H1 (cell line): ENCODE measurements at regions of chr7 and their contacts with region 1.

Region 1: GRCh38 chr7:138459413-138460175 is 465 bp upstream of the TRIM24 start:
- DNase-seq: peak; percentile 96 to 99
- H3K4me3 ChIP-seq: peak overlapping the region; percentile 44 to 80 (median 70)
- H3K27ac ChIP-seq: peak overlapping the region; percentile 59
- H3K4me1 ChIP-seq: peaks cover 0 to 10% (median 6%) of the 10 kb centered on the region in 4 experiments; a peak in 5 of 7 replicates
- H3K27me3 ChIP-seq: no peaks in the 10 kb centered on the region
- CTCF ChIP-seq: no peak
- EP300 ChIP-seq: no peak
- POLR2A ChIP-seq: peak; percentile 71 to 96
- RAD21 ChIP-seq: peak in 1 of 2 experiments; percentile 15; a peak in 1 of 4 replicates

Region 2: GRCh38 chr7:138170959-138171703 is 288.5 kb before region 1 on chr7:
- CTCF ChIA-PET with region 1: interaction called, 3 read pairs
- POLR2A ChIA-PET with region 1: interaction called, 24 read pairs
- DNase-seq: no peak
- H3K4me3 ChIP-seq: peak overlapping the region in 1 of 4 experiments; percentile 41; a peak in 1 of 8 replicates
- H3K27ac ChIP-seq: peak overlapping the region; percentile 84
- H3K4me1 ChIP-seq: peaks cover 9 to 24% (median 22%) of the 10 kb centered on the region in 4 experiments; a peak in 6 of 7 replicates
- H3K27me3 ChIP-seq: no peaks in the 10 kb centered on the region
- CTCF ChIP-seq: no peak
- EP300 ChIP-seq: no peak
- POLR2A ChIP-seq: no peak
- RAD21 ChIP-seq: no peak

Region 3: DNA sequence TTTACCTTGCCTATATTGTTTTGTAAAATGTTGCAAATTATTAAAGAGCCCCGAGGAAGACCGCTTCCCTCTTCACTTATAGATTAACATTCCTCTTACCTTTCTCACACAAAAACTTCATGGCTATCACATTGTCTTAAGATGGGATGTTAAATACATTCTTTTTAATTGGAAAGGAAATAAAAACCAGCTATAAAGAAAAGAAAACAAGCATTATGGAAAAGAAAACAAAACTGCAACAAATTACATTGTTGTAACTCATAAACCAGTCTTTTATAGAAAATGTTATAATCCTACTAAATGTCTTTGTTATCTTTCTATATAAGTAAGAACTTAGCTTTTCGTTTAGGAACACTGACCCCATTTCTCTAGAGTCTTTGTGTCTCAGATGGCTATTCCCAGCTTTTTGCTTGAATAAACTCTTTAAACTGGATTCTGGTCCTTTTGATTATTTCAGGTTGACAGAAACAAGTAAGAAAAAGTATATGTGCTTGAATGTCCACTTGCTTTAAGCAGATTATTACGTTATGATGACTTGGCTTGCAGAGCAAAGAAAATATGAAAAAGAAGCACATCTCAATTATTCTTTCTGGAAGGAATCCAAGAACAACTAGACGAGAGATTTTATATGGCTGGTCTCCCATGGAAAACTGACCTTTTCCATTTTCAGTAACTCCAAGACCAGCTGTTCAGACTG is 255.2 kb before region 1 on chr7:
- CTCF ChIA-PET with region 1: interaction called, 4 read pairs
- POLR2A ChIA-PET with region 1: interaction called, 27 read pairs
- DNase-seq: no peak
- H3K4me3 ChIP-seq: no peak overlapping the region
- H3K27ac ChIP-seq: peak overlapping the region; percentile 48; the same call in 1 of the 2 replicates
- H3K4me1 ChIP-seq: peaks cover 14 to 39% (median 30%) of the 10 kb centered on the region in 4 experiments
- H3K27me3 ChIP-seq: no peaks in the 10 kb centered on the region; a peak in 2 of 7 replicates
- CTCF ChIP-seq: no peak
- EP300 ChIP-seq: no peak
- POLR2A ChIP-seq: no peak
- RAD21 ChIP-seq: no peak

Region 4: GRCh38 chr7:138324941-138325340 is 134.7 kb before region 1 on chr7:
- CTCF ChIA-PET with region 1: no interaction called
- POLR2A ChIA-PET with region 1: no interaction called
- DNase-seq: no peak
- H3K4me3 ChIP-seq: no peak overlapping the region
- H3K27ac ChIP-seq: no peak overlapping the region
- H3K4me1 ChIP-seq: peaks cover 0 to 2% (median 0%) of the 10 kb centered on the region in 4 experiments; a peak in 2 of 7 replicates
- H3K27me3 ChIP-seq: no peaks in the 10 kb centered on the region
- CTCF ChIP-seq: no peak
- EP300 ChIP-seq: no peak
- POLR2A ChIP-seq: no peak
- RAD21 ChIP-seq: no peak

Region 5: DNA sequence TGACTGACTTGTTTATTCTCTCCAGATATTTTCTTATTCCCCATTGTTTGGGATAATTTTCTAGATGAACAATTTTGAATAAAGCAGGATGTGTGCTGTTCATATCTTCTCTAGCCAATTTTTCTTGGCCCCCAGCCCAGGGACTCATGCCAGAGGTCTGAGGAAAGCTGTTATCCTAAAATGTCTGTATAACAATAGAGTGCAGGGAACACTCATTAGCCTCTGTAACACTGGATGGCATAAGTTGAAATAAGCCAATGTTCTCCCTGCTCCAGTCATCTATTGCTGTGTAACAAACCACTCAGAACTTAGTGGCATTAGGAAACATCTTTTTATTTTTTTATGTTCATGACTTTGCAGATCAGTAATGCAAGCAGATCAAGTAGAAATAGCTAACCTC is 121.2 kb before region 1 on chr7:
- CTCF ChIA-PET with region 1: no interaction called
- POLR2A ChIA-PET with region 1: no interaction called
- DNase-seq: no peak
- H3K4me3 ChIP-seq: no peak overlapping the region
- H3K27ac ChIP-seq: no peak overlapping the region
- H3K4me1 ChIP-seq: no peaks in the 10 kb centered on the region
- H3K27me3 ChIP-seq: no peaks in the 10 kb centered on the region
- CTCF ChIP-seq: no peak
- EP300 ChIP-seq: no peak
- POLR2A ChIP-seq: no peak
- RAD21 ChIP-seq: no peak

Region 6: DNA sequence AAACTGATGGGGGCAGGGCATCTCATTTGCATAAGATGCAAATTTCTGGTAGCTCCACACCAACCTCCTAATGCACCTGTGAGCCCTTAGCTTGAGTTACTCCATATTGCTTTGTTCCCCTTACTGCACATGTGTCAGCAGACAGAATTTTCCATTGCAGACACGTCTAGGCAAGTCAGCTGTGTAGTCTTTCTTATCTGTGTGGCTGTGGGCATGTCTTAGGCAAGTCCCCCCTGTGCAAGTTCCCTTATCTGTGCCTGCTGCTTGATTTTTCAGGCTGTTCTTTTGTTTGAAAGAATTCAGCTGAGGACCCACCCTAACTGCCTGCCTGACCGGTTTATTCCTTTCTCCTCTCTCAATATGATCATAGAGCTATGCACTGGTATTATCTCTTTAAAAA is 28.1 kb before region 1 on chr7:
- CTCF ChIA-PET with region 1: no interaction called
- POLR2A ChIA-PET with region 1: interaction called, 15 read pairs
- DNase-seq: no peak
- H3K4me3 ChIP-seq: 0 out of 8 replicates have a peak overlapping the region, but pooled peaks of 1 of the 4 experiments have one; percentile 17
- H3K27ac ChIP-seq: no peak overlapping the region
- H3K4me1 ChIP-seq: peaks cover 0 to 16% (median 6%) of the 10 kb centered on the region in 4 experiments; a peak in 5 of 7 replicates
- H3K27me3 ChIP-seq: no peaks in the 10 kb centered on the region
- CTCF ChIP-seq: no peak
- EP300 ChIP-seq: no peak
- POLR2A ChIP-seq: no peak
- RAD21 ChIP-seq: no peak

Region 7: DNA sequence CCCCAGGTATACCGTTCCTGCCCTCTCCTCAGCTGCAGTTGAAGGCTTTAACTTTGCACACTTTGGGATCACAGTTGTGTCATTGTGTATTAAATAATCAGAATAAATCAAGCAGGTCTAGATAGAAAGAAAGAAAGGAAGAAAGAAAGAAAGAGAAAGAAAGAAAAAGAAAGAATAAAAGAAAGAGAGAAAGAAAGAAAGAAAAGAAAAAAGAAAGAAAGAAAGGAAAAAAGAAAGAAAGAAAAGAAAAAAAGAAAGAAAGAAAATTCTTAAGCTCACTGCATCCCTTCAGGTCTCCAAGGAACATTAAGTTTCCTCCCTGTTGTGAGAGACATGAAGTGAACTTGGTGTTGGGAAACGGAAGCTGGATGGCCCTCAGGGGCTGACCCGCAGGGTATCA is 16.8 kb before region 1 on chr7:
- CTCF ChIA-PET with region 1: no interaction called
- POLR2A ChIA-PET with region 1: interaction called, 21 read pairs
- DNase-seq: no peak
- H3K4me3 ChIP-seq: no peak overlapping the region
- H3K27ac ChIP-seq: no peak overlapping the region
- H3K4me1 ChIP-seq: no peaks in the 10 kb centered on the region
- H3K27me3 ChIP-seq: no peaks in the 10 kb centered on the region
- CTCF ChIP-seq: no peak
- EP300 ChIP-seq: no peak
- POLR2A ChIP-seq: no peak
- RAD21 ChIP-seq: no peak

Region 8: GRCh38 chr7:138449580-138449979 is 10.0 kb before region 1 on chr7:
- CTCF ChIA-PET with region 1: interaction called, 3 read pairs
- POLR2A ChIA-PET with region 1: interaction called, 21 read pairs
- DNase-seq: peak in 1 of 2 experiments; percentile 74
- H3K4me3 ChIP-seq: no peak overlapping the region
- H3K27ac ChIP-seq: no peak overlapping the region
- H3K4me1 ChIP-seq: no peaks in the 10 kb centered on the region
- H3K27me3 ChIP-seq: no peaks in the 10 kb centered on the region
- CTCF ChIP-seq: peak; percentile 23 to 54 (median 46); a peak in 3 of 4 replicates
- EP300 ChIP-seq: no peak
- POLR2A ChIP-seq: no peak
- RAD21 ChIP-seq: peak; percentile 49 to 71

Region 9: GRCh38 chr7:138478499-138478908 is 18.9 kb after region 1 on chr7:
- CTCF ChIA-PET with region 1: no interaction called
- POLR2A ChIA-PET with region 1: interaction called, 26 read pairs
- DNase-seq: no peak
- H3K4me3 ChIP-seq: no peak overlapping the region
- H3K27ac ChIP-seq: no peak overlapping the region
- H3K4me1 ChIP-seq: peaks cover 0 to 24% (median 7%) of the 10 kb centered on the region in 4 experiments; a peak in 6 of 7 replicates
- H3K27me3 ChIP-seq: no peaks in the 10 kb centered on the region
- CTCF ChIP-seq: no peak
- EP300 ChIP-seq: no peak
- POLR2A ChIP-seq: no peak
- RAD21 ChIP-seq: no peak

Region 10: DNA sequence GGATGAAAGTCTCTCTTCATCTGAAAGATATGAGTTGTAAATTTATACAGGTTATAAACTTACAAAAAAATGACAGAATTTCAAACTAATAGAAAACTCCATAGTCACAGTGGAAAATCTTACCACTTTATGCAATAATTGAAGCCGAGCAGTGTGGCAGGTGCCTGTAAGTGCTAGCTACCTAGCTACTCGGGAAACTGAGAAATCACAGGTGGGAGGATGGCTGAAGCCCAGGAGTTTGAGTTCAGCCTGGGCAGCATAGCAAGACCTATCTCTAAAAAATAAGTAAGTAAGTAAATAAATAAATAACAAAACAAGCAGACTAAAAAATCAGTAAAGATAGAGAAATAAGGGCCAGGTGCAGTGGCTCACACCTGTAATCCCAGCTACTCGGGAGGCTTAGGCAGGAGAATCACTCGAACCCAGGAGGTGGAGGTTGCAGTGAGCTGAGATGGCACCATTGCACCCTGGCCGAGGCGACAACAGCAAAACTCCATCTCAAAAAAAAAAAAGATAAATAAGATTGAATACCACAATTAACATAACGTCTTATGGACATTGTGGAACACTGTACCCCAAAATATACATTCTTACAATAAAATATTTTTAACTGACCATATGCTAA is 62.4 kb after region 1 on chr7:
- CTCF ChIA-PET with region 1: no interaction called
- POLR2A ChIA-PET with region 1: no interaction called
- DNase-seq: no peak
- H3K4me3 ChIP-seq: no peak overlapping the region
- H3K27ac ChIP-seq: no peak overlapping the region
- H3K4me1 ChIP-seq: no peaks in the 10 kb centered on the region
- H3K27me3 ChIP-seq: no peaks in the 10 kb centered on the region
- CTCF ChIP-seq: no peak
- EP300 ChIP-seq: no peak
- POLR2A ChIP-seq: no peak
- RAD21 ChIP-seq: no peak

Region 11: DNA sequence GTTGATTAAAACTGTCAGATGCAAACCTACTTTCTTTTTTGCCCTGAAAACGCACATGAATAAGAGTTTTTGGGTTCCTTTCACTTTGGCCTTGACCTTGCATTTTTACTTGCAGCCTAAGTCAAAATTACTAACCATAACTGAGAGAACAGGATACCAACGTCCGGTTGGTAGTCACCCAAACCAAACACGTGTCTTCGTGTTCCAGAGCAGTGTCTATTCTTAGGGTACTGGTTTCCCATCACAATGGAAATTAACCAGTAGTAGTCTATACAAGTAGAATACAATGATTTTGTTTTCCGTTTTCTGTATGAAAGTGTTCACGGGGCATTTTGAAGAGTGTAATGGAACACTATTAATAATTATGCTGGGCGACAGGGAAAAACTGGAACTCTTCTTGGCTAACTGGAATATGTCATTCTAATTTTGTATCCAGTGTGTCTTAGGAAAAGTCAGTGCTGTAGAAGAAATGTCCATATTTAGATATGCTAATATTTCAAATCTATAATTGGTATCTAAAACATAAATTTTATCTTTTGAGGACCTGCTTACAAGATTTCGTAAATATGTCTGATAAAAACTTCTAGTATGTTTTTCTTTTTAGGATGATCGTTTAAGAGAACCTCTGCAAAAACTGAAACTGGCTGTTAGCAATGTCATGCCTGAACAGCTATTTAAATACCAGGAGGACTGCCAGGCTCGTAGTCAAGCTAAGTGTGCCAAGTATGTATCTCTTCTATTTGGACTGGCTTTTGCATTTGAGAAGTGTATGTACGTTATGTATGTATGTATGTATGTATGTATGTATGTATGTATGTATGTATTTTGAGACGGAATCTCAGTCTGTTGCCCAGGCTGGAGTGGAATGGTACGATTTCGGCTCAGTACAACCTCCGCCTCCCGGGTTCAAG is 812.4 kb after region 1 on chr7:
- CTCF ChIA-PET with region 1: no interaction called
- POLR2A ChIA-PET with region 1: no interaction called
- DNase-seq: no peak
- H3K4me3 ChIP-seq: no peak overlapping the region
- H3K27ac ChIP-seq: no peak overlapping the region
- H3K4me1 ChIP-seq: no peaks in the 10 kb centered on the region
- H3K27me3 ChIP-seq: no peaks in the 10 kb centered on the region
- CTCF ChIP-seq: no peak
- EP300 ChIP-seq: no peak
- POLR2A ChIP-seq: no peak
- RAD21 ChIP-seq: no peak